Activated naive CD4-positive, alpha-beta T cell treated with anti-CD3 and anti-CD28 coated beads for 36 hours (primary cell): ENCODE measurements at regions of chr10 and their contacts with region 1.

Region 1: GRCh38 chr10:132446661-132447194 is 49.7 kb downstream of the PWWP2B start:
- DNase-seq: peak; percentile 93
- H3K4me3 Mint-ChIP-seq: peak overlapping the region; percentile 89
- H3K27ac Mint-ChIP-seq: peak overlapping the region; percentile 98
- H3K4me1 Mint-ChIP-seq: peaks cover 33% of the 10 kb centered on the region
- H3K27me3 Mint-ChIP-seq: no peaks in the 10 kb centered on the region

Region 2: DNA sequence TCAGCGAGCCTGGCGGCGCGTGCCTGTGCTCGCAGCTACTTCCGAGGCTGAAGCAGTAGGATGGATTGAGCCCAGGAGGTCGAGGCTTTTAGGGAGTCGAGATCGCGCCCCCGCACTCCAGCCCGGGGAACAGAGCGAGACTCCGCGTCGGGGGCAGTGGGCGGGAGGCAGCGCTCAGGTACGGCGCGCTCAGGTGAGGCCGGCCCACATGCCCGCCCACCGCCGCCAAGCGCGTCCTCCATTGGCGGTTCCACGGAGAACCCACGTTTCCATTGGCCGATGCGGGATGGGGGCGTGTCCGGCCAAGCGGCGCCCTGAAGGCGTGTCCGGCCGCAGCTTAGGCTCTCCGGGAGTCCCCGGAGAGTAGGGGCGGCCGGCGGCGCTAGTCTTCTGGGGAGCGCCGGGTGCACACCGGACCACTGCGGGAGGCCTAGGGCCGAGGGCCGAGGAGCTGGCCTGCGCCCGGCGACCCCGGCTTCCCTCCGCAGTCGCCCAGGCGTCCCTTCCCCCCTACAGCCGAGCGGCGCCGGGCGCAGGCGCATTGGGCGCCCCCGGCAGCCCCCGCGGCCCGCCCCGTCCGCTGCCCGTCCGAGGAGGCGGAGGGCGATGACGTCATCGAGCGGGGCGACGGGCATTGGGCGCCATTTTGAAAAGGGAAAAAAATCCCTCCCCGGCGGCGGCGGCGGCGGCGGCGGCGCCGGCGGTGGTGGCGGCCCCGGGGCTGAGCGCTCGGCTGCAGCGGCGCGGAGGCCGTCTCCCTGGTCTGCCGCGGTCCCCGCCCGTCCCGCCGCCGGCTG is 546.2 kb before region 1 on chr10 and contains the start of gene PPP2R2D:
- CTCF ChIA-PET with region 1: no interaction called
- intact Hi-C with region 1: loop called (anchors 5 kb)
- DNase-seq: peak; percentile 94
- H3K4me3 Mint-ChIP-seq: peak within 1 kb of the TSS; percentile 87
- H3K27ac Mint-ChIP-seq: peak within 1 kb of the TSS; percentile 92
- H3K4me1 Mint-ChIP-seq: peaks cover 47% of the 10 kb centered on the region
- H3K27me3 Mint-ChIP-seq: peaks cover 4% of the 10 kb centered on the region
- total RNA-seq, gene PPP2R2D: 31.5 to 34.7 TPM

Region 3: GRCh38 chr10:132229834-132230556 is 216.7 kb before region 1 on chr10:
- CTCF ChIA-PET with region 1: no interaction called
- intact Hi-C with region 1: loop called (anchors 5 kb)
- DNase-seq: peak; percentile 64
- H3K4me3 Mint-ChIP-seq: peak overlapping the region; percentile 53
- H3K27ac Mint-ChIP-seq: peak overlapping the region; percentile 73
- H3K4me1 Mint-ChIP-seq: peaks cover 22% of the 10 kb centered on the region
- H3K27me3 Mint-ChIP-seq: no peaks in the 10 kb centered on the region

Region 4: DNA sequence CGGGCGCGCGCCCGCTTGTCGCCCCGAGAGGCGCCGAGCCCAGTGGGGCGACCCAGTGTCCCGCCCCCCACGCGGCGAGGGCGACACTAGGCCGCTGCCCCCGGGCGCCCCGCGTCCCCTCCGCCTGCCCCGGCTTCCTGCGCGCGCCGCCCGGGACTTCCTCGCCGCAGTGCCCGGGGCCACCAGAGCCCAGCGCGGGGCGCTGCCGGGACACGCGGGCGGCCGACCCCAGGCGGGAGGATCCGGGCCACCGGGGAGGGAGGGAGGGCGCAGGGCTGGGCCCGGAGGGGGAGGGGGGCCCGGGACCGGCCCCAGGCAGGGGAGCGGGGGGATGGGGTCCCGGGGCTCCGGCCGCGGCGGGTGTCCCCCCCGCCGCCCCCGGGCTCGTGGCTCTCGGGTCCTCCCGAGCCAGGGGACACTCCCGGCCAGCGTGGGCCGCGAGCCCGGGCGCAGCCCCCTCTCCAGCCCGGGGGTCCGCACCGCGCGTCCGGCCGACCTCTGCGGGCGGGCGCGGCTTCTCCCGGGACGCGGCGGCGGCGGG is 50.2 kb before region 1 on chr10:
- CTCF ChIA-PET with region 1: no interaction called
- intact Hi-C with region 1: loop called (anchors 1 kb)
- DNase-seq: peak; percentile 65
- H3K4me3 Mint-ChIP-seq: no peak overlapping the region
- H3K27ac Mint-ChIP-seq: no peak overlapping the region
- H3K4me1 Mint-ChIP-seq: peaks cover 13% of the 10 kb centered on the region
- H3K27me3 Mint-ChIP-seq: no peaks in the 10 kb centered on the region

Region 5: GRCh38 chr10:132506711-132507408 is 60.1 kb after region 1 on chr10:
- CTCF ChIA-PET with region 1: no interaction called
- intact Hi-C with region 1: no loop called
- DNase-seq: no peak
- H3K4me3 Mint-ChIP-seq: no peak overlapping the region
- H3K27ac Mint-ChIP-seq: no peak overlapping the region
- H3K4me1 Mint-ChIP-seq: no peaks in the 10 kb centered on the region
- H3K27me3 Mint-ChIP-seq: no peaks in the 10 kb centered on the region

Region 6: DNA sequence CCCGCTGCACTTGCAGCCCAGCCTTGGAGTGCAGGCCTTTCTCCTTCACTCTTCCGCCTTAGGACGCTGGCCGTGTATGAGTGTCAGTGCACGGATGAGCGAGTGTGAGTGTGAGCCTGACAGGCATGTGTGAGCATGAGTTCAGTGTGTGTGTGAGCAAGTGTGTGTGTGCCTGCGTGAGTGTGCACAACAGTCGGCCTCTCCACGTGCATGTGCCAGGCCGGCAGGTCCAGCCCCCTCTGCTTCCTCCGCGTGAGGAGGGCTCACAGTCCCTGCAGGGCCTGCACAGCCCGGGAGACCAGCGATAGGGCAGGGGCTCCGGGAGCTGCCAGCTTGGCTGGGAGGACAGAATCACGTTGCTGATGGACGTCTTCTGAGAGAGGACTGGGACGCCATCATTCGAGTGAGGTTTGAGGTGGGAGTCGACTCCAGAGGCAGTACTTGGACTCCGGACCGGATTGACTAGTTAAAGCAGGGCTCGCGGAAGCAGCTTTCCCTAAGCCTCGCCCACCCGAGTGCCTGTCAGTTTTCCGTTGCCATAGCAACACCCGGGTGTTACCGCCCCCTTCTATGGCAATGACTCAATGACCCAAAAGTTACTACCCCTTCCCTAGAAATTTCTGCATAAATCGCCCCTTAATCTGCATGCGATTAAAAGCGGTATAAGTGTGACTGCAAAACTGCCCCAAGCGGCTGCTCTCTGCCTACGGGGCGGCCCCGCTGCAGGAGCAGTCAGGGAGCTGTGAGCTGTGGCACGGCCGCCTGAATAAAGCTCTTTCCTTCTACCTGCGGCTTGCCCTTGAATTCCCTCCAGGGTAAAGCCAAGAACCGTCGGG is 515.3 kb after region 1 on chr10:
- CTCF ChIA-PET with region 1: no interaction called
- intact Hi-C with region 1: loop called (anchors 5 kb)
- DNase-seq: peak; percentile 93
- H3K4me3 Mint-ChIP-seq: peak overlapping the region; percentile 67
- H3K27ac Mint-ChIP-seq: peak overlapping the region; percentile 84
- H3K4me1 Mint-ChIP-seq: peaks cover 23% of the 10 kb centered on the region
- H3K27me3 Mint-ChIP-seq: peaks cover 14% of the 10 kb centered on the region